Caco-2 (cell line): ENCODE measurements at regions of chr20 and their contacts with region 1.

Region 1: GRCh38 chr20:35487479-35487878 is 32.1 kb downstream of the CEP250 start:
- DNase-seq: no peak
- H3K4me3 ChIP-seq: no peak overlapping the region
- H3K4me3 Mint-ChIP-seq: no peak overlapping the region
- H3K27ac Mint-ChIP-seq: no peak overlapping the region
- H3K4me1 ChIP-seq: no peaks in the 10 kb centered on the region
- H3K4me1 Mint-ChIP-seq: no peaks in the 10 kb centered on the region
- H3K27me3 ChIP-seq: no peaks in the 10 kb centered on the region
- H3K27me3 Mint-ChIP-seq: no peaks in the 10 kb centered on the region
- CTCF ChIP-seq: no peak

Region 2: DNA sequence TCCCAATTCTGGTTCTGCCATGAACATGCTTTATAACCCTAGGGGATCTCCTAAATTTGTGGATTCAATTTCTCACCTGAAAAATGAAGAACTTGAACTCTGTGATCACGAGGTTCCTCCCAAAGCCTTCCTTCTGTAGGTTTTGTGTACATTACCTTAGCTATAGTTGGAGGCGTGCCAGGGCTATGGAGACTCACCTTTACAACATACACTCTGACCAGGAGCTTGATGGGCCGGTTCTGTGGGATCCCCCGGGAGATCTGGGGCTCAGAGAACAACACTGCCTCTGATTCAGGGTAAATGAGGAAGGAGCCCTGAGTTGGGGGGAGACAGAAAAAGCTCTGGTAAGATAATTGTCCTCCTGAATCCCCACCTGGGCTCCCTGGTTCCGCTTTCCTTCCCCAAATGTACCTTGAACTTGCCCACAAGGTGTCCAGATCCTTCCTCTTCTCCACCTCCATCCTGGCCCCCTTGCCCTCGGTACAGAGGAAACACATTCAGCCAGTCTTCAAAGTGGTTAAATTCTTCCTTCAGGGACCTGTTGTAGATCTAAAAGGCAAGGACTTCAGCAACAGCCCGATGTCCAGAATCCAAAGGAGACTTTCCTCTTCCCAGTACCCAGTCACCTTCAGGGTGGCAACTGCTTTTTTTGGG is 88.6 kb after region 1 on chr20:
- CTCF ChIA-PET with region 1: no interaction called
- POLR2A ChIA-PET with region 1: interaction called, 10 read pairs
- intact Hi-C with region 1: no loop called
- DNase-seq: peak in 1 of 2 experiments; percentile 59
- H3K4me3 ChIP-seq: no peak overlapping the region
- H3K4me3 Mint-ChIP-seq: no peak overlapping the region
- H3K27ac Mint-ChIP-seq: no peak overlapping the region
- H3K4me1 ChIP-seq: peaks cover 6% of the 10 kb centered on the region; the same call in 1 of the 2 replicates
- H3K4me1 Mint-ChIP-seq: peaks cover 9% of the 10 kb centered on the region
- H3K27me3 ChIP-seq: no peaks in the 10 kb centered on the region
- H3K27me3 Mint-ChIP-seq: no peaks in the 10 kb centered on the region
- CTCF ChIP-seq: no peak